Cardiac septum (tissue), 1 donor: ENCODE measurements at regions of chr6 and their contacts with region 1.

Region 1: DNA sequence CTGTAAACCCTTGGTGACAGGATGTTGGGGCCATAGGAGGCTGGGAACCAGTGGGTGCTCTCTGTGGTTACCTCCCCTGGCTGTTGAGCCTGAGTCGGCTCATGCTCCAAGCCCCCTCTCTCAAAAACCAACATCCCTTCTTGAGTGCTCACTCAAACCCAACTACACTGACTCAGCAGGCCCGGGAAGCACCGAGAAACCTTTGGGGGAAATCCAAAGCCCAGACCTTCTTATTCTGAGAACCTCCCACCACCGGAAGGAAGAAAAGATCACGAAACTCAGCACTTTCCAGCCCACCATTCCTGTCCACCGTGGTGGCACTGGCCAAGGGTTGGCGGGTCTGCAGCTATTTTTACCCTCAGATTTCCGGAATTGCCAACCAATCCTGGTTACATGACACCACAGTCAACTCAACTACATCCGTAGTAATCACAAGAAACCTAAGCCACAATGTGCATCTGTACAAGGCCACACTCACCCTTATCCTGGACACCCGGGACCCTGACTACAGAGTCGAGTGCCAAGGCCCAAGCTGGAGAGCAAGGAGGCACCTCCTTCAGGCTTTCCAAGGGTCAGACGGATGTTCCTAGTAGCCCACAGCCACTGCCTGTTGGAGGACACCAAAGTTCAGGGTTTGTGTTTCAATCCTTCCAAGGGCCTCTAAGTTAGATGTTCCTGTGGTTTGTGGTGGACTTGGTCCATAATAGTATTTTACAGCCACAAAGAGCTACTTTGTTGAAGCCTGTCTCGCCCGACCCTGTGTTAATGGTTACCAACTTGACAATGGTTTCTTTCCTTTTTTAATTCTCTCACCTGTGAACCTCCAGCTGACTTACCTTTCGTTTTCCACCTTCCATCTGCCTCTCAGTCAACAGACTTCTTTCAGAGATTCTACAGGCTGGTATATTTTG is 317.0 kb downstream of the CDC5L start:
- DNase-seq: no peak

Region 2: GRCh38 chr6:44849806-44850205 is 145.3 kb after region 1 on chr6:
- intact Hi-C with region 1: loop called (anchors 10 kb)
- DNase-seq: no peak

Region 3: DNA sequence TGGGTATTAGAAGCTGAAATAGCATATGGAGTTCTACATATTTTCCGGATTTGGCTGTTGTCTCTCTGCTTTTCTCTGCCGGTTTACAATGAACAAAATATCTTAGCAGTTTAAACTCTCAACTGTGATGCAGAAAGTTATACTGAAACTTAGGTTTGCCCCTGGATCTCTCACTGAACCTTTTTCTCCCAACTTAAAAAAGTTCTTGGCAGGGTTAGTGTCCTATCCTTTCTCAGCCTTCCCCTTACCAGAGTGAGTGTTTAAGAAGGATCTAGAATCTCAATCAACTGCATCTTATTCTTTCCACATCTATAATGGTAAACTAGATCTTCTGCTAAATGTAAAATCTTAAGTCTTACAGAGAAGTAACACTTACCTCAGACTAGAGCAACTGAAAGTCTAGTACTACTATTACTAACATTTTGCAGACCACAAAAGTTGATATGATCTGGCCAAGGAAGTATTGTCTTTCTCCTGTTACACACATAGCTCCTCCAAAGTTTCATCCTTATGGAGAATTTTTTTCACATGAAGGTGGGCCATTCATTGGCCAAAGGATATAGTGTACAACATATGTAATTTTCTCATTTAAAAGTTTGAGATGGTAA is 231.3 kb after region 1 on chr6:
- intact Hi-C with region 1: no loop called
- DNase-seq: no peak